Transverse colon (tissue), 4 donors: ENCODE measurements at regions of chr15 and their contacts with region 1.

Region 1: DNA sequence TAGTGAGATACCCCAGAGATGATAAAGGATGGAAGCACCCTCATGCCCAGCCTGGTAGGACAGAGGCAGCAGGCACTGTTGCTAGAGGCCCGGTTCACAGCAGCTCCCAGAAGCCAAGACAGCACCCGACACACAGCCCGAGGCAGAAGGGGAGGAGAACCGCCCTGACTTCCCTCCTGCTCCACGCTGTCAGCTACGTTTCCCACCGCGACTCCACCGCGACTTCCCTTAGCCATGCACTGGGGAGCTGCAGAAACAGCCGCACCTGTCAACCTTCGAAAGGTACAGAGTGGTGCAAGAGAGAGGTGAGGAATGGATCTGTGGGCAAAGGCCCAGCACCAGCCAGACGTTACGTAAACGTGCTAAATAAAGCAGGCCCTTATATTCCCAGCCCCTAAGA is 529.2 kb downstream of the GABRG3 start:
- DNase-seq: no peak
- H3K4me3 ChIP-seq: no peak overlapping the region
- H3K27ac ChIP-seq: no peak overlapping the region
- H3K4me1 ChIP-seq: no peaks in the 10 kb centered on the region
- H3K27me3 ChIP-seq: no peaks in the 10 kb centered on the region
- CTCF ChIP-seq: no peak
- EP300 ChIP-seq: no peak
- POLR2A ChIP-seq: no peak

Region 2: DNA sequence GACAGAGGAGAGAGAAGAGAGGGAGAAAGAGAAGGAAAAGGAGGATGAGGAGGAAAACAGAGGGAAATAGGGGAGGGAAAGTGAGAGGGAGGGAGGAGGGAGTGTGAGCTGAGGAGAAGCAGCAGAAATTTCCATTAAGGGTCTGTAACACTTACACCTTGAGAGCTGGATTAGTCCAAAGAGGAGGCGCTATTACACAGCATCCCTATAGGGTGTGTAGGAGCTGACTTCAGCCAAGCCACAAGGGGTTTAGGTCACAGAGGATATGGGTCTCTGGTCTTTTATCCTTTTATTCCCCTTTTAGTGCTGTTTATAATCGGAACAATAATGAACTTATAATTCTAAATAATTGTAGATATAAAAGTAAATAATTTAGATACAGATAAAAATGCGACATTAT is 298.8 kb before region 1 on chr15:
- in situ Hi-C with region 1: no loop called
- intact Hi-C with region 1: no loop called
- DNase-seq: no peak
- H3K4me3 ChIP-seq: no peak overlapping the region
- H3K27ac ChIP-seq: no peak overlapping the region
- H3K4me1 ChIP-seq: no peaks in the 10 kb centered on the region
- H3K27me3 ChIP-seq: no peaks in the 10 kb centered on the region
- CTCF ChIP-seq: no peak
- EP300 ChIP-seq: no peak
- POLR2A ChIP-seq: no peak

Region 3: DNA sequence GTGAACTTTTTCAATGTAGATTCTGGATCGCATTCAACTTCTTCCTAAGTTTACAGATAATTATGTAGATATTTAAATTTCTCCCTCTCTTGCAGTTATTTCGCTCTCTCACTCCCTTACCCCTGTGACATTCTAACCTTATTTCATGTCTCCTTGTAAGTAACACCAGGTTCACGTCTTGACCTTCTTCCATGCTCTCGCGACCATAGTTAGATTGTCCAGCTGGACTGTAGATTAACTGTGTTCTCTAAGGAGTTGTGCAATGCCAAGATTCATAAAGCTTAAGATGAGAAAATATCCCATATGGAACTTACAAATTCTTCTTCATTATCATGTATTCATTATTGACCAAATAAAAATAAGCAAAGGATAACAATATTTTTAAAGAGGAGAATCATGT is 98.7 kb before region 1 on chr15:
- in situ Hi-C with region 1: no loop called
- intact Hi-C with region 1: no loop called
- DNase-seq: no peak
- H3K4me3 ChIP-seq: no peak overlapping the region
- H3K27ac ChIP-seq: no peak overlapping the region
- H3K4me1 ChIP-seq: no peaks in the 10 kb centered on the region
- H3K27me3 ChIP-seq: no peaks in the 10 kb centered on the region
- CTCF ChIP-seq: no peak
- EP300 ChIP-seq: no peak
- POLR2A ChIP-seq: no peak

Region 4: DNA sequence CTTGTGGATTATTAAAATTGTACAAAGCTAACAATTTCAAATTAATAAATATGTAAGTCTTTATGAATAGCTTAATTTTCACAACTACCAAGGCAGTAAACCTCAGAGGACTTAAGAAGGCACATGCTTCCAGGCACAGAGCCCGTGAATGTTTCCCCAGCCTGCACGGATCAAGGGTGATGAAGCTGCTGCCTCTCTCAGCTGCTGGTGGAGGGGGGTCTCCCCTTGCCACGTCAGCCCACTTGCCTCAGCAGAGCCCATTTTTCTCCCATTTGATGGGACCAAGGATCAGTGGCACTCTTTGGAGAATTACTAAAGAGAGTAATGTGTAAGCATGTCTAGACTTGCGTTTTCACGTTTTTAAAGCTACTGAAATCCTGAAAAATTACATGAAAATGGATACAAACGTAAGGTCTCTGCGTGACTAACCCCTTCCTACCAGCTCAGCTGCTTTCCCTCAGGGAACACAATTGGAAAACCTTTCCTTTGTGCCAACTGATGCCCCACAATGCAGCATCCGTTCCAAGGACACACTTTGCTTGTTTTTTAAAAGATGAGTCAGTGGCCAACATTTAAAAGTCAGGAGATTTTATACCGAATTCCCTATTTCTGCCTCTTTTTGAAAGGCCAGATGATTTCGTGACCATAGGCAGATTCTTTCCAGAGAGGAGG is 35.1 kb before region 1 on chr15:
- in situ Hi-C with region 1: no loop called
- intact Hi-C with region 1: loop called (anchors 5 kb)
- DNase-seq: no peak
- H3K4me3 ChIP-seq: no peak overlapping the region
- H3K27ac ChIP-seq: no peak overlapping the region
- H3K4me1 ChIP-seq: no peaks in the 10 kb centered on the region
- H3K27me3 ChIP-seq: no peaks in the 10 kb centered on the region
- CTCF ChIP-seq: no peak
- EP300 ChIP-seq: no peak
- POLR2A ChIP-seq: no peak